Activated CD4-positive, alpha-beta T cell treated with anti-CD3 and anti-CD28 coated beads, Interleukin-2, amount 10 ng/mL, durations not matched to agents 24 days and 14 days (primary cell): ENCODE measurements at regions of chr2 and their contacts with region 1.

Region 1: GRCh38 chr2:39243476-39244123 is at the start of gene CDKL4:
- DNase-seq: peak; percentile 82
- H3K4me3 Mint-ChIP-seq: peak within 1 kb of the TSS; percentile 87
- H3K27ac Mint-ChIP-seq: peak within 1 kb of the TSS; percentile 43
- H3K4me1 Mint-ChIP-seq: peaks cover 14% of the 10 kb centered on the region
- H3K27me3 Mint-ChIP-seq: no peaks in the 10 kb centered on the region
- total RNA-seq, gene CDKL4: not detected in 2 replicates

Region 2: DNA sequence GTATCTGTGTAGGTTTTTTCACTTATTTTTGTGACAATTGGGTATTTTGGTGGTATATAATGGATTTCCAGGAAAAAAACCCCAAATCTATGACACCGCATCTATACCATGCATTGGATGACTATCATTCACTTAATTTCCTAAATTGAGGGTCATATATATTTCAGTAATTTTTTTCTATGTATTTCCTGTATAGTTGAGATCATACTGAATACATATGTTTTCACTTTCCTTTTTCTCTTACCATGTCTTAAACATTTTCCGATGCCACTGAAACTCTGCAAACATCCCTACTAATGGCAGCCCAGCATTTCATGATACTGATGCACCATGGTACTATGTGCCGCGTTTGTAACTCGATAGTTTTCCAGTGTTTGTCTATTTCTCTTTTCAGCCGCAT is 40.2 kb before region 1 on chr2:
- intact Hi-C with region 1: no loop called
- DNase-seq: peak; percentile 66
- H3K4me3 Mint-ChIP-seq: peak overlapping the region; percentile 9
- H3K27ac Mint-ChIP-seq: no peak overlapping the region
- H3K4me1 Mint-ChIP-seq: peaks cover 24% of the 10 kb centered on the region
- H3K27me3 Mint-ChIP-seq: peaks cover 2% of the 10 kb centered on the region

Region 3: GRCh38 chr2:39728941-39729351 is 485.3 kb after region 1 on chr2:
- intact Hi-C with region 1: loop called (anchors 10 kb)
- DNase-seq: peak; percentile 70
- H3K4me3 Mint-ChIP-seq: no peak overlapping the region
- H3K27ac Mint-ChIP-seq: no peak overlapping the region
- H3K4me1 Mint-ChIP-seq: peaks cover 10% of the 10 kb centered on the region
- H3K27me3 Mint-ChIP-seq: peaks cover 2% of the 10 kb centered on the region